ENCODE measurements at regions of chr1 and their contacts with region 1.

Region 1: DNA sequence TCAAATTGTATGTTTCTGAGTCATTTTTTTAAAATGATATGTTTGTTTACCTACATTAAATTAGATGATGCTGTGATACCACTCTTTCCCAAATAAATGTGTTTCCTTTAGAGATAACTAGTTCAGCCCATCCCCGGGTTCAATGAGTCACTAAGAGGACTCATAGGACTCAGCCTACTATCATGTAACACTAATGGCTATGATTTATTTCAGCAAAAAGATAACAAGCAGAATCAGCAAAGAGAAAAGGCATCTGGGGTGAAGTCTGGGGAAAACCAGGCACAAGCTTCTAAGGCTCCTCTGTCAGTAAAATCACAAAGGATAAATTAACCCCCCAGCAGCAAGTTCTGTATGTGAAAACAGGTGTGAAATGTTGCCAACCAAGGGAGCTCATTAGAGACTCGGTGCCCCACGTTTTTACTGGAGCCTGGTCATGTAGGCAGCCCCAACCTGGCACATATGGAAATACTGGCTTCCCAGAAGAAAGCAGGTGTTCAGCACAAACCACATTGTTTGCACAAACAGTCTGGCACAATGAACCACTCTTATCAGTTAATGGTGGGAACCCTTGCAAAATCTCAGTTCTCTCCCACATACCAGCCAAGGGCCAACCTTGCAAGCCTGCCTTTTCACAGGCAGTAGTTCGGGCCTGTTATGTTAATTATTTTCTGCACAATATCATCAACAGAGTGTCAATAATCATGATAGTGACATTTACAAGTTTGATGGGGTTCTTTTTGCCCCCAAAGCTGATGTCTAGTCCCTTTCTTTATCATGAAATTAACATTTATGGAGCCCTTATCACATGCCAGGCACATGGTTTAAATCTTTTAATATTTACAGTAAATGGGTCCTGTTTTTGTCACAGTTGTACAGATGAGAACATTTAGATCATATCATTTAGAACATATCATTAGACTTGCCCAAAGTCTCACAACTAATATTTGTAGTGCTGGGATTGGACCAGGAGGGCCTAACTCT is 23.1 kb upstream of the CNN3 start:
- DNase-seq: peak in 1 of 2 donors; percentile 49
- ATAC-seq: peak; percentile 75

Region 2: DNA sequence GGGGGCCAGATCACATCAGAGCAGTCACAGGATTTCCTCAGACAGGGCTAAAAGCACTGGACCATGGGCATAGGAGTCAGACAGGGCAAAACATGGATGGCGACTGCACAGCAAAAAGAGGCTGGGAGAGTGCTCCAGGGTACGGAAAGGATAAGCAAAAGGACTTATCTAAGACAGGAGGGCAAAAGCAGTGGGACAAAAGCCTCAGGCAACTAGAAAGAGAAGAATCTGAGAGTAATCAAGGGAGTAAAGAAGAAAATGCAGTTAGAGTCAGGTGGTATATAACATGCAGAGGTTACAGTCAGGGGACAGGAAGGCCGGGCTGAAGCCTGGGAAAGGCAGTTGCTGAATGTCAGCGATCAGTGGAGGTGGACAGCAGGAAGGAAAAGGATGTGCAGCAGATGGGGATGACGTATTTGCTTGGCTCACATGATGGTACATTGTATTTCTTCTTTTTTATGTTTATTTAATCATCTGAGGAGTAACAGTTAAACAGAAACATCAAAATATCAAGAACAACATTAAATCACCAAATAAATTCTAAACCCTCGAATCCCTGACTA is 40.0 kb after region 1 on chr1:
- intact Hi-C with region 1: loop called in 1 of 2 experiments (anchors 10 kb)
- DNase-seq: no peak
- ATAC-seq: no peak